Right cardiac atrium (tissue), 5 donors: ENCODE measurements at regions of chr10 and their contacts with region 1.

Region 1: DNA sequence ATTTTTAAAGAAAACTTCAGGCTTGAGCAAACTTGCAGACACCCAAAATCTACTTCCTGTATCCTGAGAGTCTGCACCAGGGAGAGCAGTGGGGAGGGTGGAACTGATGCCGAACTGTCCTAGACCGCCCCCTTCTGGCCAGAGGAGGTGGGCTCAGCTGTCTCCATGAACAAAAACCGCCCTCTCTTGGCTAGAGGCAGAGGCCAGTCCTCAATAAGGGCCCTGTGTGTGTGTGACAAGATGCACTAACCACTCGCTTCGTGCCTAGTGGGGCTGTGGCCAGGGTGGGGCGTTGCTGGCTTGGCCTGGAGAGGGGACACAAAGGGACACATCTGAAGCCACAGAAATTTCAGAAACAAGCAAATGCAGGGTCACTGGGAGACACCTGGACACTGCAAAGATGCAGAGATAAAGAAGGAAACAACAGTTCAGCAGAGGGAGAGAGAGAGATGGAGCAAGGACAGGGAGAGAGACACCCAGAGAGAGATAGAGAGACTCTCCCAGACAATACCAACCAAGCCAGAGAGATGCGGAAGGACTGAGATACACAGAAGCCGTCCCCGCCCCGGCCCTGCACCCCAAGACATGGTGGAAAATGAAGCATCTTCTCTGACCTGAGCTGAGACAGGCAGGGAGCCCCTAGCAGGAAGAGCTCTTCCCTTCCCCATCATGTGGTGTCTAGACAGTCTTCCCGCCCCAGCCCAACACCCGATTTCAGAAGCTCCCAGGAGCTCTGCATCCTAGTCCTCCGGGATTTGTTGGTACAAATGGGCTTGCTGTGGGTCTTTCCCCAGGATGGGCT is 22.7 kb upstream of the FXYD4 start:
- DNase-seq: peak; percentile 81 to 94 (median 92)
- ATAC-seq: peak; percentile 98
- H3K4me3 ChIP-seq: no peak overlapping the region
- H3K27ac ChIP-seq: no peak overlapping the region
- H3K4me1 ChIP-seq: no peaks in the 10 kb centered on the region
- H3K27me3 ChIP-seq: no peaks in the 10 kb centered on the region

Region 2: DNA sequence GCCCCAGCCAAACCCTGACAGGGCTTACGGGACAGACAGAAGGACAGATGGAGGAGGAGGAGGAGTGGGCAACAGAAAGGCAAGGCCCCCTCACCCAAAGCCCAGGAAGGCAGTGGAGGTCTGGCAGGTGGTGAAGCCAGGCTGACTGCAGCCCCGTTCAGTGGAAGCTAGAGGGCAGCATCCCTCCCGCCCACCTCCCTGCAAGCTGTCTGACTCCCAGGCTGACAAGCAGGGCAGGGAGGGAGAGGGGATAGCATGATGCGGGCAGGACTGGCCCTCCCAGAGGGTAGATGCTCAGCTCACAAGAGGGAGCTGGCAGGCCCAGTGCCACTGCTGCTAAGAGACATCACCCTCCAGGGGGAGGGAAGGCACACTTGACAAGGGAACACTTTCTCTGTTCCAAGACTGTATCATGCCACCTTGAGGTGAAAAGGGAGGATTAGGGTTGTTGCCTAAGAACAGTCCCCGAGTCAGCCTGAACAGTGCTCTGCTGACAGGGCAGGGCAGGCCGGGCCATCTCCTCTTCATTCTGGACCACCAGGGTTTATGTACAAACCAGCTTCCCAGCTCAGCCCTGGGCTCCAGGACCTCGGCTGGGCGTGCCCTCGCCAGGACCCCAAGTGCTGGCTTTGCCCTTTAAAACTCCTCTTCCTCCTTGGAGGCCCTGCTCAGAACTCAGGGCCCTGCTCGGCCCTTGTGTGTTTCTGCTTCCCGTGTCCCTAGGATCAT is 143.6 kb before region 1 on chr10:
- intact Hi-C with region 1: loop called in 1 of 4 experiments (anchors 10 kb)
- DNase-seq: peak in 2 of 3 donors; percentile 24 to 72
- ATAC-seq: peak in 1 of 2 donors; percentile 45
- H3K4me3 ChIP-seq: no peak overlapping the region
- H3K27ac ChIP-seq: no peak overlapping the region
- H3K4me1 ChIP-seq: no peaks in the 10 kb centered on the region
- H3K27me3 ChIP-seq: no peaks in the 10 kb centered on the region

Region 3: GRCh38 chr10:43292755-43293676 is 55.7 kb before region 1 on chr10:
- intact Hi-C with region 1: loop called (anchors 5 to 10 kb)
- DNase-seq: peak; percentile 37 to 67 (median 66)
- ATAC-seq: peak; percentile 72 to 76
- H3K4me3 ChIP-seq: no peak overlapping the region
- H3K27ac ChIP-seq: no peak overlapping the region
- H3K4me1 ChIP-seq: no peaks in the 10 kb centered on the region
- H3K27me3 ChIP-seq: no peaks in the 10 kb centered on the region

Region 4: DNA sequence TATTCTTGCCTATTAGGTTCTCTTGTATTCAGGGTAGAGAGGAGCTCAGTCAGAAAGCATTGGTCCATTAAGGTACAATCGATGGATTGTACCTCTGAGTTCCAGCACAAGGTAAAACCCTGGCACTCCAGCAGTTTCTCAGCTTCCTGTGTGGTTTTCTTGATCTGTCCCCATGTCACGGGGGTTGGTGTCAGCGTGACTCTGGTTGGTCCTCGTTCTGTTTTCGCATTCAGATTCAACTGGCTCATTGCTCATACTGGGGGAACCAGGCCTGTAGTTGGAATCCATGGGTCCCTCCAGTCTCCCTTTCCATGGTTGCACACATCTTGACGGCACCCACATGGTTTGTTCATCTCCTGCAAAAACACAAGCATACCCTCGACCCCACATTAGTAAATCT is 49.1 kb before region 1 on chr10:
- intact Hi-C with region 1: loop called (anchors 5 to 10 kb)
- DNase-seq: no peak
- ATAC-seq: no peak
- H3K4me3 ChIP-seq: no peak overlapping the region
- H3K27ac ChIP-seq: no peak overlapping the region
- H3K4me1 ChIP-seq: no peaks in the 10 kb centered on the region
- H3K27me3 ChIP-seq: no peaks in the 10 kb centered on the region

Region 5: DNA sequence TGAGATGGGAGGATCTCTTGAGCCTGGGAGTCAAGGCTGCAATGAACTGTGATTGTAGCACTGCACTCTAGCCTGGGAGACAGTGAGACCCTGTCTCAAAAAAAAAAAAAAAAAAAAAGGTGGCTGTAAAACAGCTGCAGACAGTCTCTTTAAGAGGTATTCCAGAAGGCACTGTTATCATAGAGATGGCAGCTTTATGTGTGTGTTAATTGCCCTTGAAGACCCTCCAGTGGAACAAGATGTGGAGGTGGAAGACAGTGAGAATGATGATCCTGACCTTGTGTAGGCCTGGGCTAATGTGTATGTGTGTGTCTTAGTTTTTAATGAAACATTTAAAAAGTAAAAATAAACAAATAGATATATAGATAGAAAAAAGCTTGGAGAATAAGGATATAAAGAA is 154.2 kb after region 1 on chr10:
- intact Hi-C with region 1: no loop called
- DNase-seq: no peak
- ATAC-seq: no peak
- H3K4me3 ChIP-seq: no peak overlapping the region
- H3K27ac ChIP-seq: no peak overlapping the region
- H3K4me1 ChIP-seq: no peaks in the 10 kb centered on the region
- H3K27me3 ChIP-seq: no peaks in the 10 kb centered on the region